ENCODE measurements at regions of chr3 and their contacts with region 1.

Region 1: GRCh38 chr3:189334064-189334920 is 162.5 kb downstream of the TPRG1 start:
- DNase-seq: no peak
- H3K4me3 Mint-ChIP-seq: no peak overlapping the region
- H3K27ac Mint-ChIP-seq: no peak overlapping the region
- H3K4me1 Mint-ChIP-seq: peaks cover 49% of the 10 kb centered on the region
- H3K27me3 Mint-ChIP-seq: no peaks in the 10 kb centered on the region

Region 2: DNA sequence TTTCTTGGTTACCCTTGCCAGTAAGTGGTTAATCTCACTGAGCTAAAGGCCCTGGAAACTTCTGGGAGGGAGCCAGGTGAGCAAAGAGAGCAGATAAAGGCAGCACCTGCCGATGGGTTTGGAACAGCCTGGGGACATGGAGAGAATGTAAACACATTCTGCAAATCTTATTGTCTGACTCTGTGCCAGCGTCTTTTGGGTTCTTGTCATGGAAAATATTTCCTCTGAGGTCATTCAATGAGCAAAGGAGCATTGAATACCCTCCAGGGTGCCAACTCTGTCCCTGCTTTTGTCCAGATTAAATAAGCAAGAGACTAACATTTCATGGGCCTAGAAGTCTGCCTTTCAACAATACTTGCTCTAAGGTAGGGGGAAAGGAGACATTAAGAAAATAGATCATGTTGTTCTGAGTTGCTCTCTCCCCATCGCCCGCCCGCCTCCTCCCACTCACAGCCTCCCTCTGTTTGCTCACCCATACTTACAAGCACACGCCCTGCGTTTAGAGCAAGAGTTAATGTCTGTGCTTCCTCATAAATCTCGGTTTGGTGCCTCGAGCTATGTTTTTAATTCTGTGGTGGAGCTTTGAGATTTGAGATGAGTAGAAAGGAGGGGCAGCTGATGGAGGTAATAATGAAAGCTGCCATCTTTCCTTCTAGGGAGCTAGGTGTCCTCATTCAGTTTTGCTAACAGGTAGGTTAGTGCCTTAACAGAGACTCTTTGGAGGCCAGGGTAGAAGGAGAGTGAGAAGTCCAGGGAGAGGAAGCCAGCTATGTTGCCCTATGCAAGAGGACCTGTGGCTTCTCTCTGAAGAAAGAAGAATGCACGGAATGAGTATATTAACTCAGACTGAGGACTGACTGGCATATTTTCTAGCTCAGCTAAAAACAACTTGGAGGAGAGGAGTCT is 29.6 kb before region 1 on chr3:
- CTCF ChIA-PET with region 1: no interaction called
- POLR2A ChIA-PET with region 1: interaction called, 30 read pairs
- DNase-seq: no peak
- H3K4me3 Mint-ChIP-seq: peak overlapping the region; percentile 20
- H3K27ac Mint-ChIP-seq: peak overlapping the region; percentile 81
- H3K4me1 Mint-ChIP-seq: peaks cover 45% of the 10 kb centered on the region
- H3K27me3 Mint-ChIP-seq: no peaks in the 10 kb centered on the region

Region 3: GRCh38 chr3:189355481-189356201 is 21.3 kb after region 1 on chr3:
- CTCF ChIA-PET with region 1: interaction called, 9 read pairs
- POLR2A ChIA-PET with region 1: interaction called, 29 read pairs
- DNase-seq: peak; percentile 49
- H3K4me3 Mint-ChIP-seq: peak overlapping the region; percentile 13
- H3K27ac Mint-ChIP-seq: peak overlapping the region; percentile 90
- H3K4me1 Mint-ChIP-seq: peaks cover 31% of the 10 kb centered on the region
- H3K27me3 Mint-ChIP-seq: no peaks in the 10 kb centered on the region

Region 4: GRCh38 chr3:189394599-189395121 is 60.4 kb after region 1 on chr3:
- CTCF ChIA-PET with region 1: no interaction called
- POLR2A ChIA-PET with region 1: interaction called, 20 read pairs
- DNase-seq: no peak
- H3K4me3 Mint-ChIP-seq: peak overlapping the region; percentile 47
- H3K27ac Mint-ChIP-seq: peak overlapping the region; percentile 89
- H3K4me1 Mint-ChIP-seq: peaks cover 34% of the 10 kb centered on the region
- H3K27me3 Mint-ChIP-seq: no peaks in the 10 kb centered on the region

Measured in activated CD4-positive, alpha-beta memory T cell treated with anti-CD3 and anti-CD28 coated beads, Interleukin-2, amount 10 ng/mL, durations not matched to agents 7 days and 5 days (primary cell).